ENCODE measurements at regions of chrX and their contacts with region 1.

Region 1: DNA sequence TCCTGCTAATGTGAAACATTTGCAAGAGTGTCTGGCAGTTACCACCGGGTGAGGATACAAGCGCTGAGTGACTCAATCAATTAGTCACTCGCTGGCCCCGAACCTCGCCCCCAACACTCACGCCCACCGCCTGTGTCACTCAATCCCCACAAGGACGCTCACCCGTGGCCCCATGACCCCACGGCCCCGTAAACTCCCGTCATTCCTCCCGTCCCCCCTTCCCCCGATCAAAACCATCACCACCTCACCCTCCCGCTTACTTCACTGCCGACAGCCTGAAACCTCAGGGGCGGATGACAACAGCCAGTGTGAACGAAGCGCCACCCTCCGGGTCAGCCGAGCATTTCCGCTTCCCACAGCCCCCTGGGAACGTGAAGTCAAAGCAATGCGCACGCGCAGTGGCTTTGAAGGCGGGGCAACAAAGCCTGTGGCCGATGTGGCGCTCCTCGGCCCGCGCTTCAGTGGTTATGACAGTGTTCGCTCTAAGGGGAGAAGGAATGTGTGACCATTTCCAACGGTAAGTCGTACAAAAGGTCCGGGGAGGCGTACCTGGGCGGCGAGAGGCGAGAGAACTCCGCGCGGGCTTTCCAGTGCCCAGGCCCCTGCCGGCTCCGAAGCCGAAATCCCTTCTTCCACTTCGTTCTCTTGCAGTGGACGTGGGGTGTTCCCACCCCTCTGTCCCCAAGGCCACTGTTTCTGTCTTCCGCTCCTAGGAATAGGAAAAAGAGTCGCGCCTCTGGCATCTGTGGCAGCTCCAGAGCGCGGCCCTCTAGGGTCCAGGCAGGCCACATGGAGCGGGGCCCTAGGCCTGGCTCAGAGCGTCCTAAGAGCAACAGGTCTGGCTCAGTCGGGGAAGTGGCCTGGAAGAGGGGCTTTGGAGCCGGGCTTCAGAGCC is at the start of gene ZNF674:
- DNase-seq: peak; percentile 87 to 97 (median 93)
- ATAC-seq: peak; percentile 91
- H3K4me3 ChIP-seq: peak within 1 kb of the TSS; percentile 93
- H3K4me3 Mint-ChIP-seq: peak within 1 kb of the TSS; percentile 93
- H3K27ac ChIP-seq: peak within 1 kb of the TSS; percentile 89 to 91
- H3K27ac Mint-ChIP-seq: peak within 1 kb of the TSS; percentile 97
- H3K4me1 ChIP-seq: peaks cover 22% of the 10 kb centered on the region
- H3K4me1 Mint-ChIP-seq: peaks cover 29% of the 10 kb centered on the region
- H3K27me3 ChIP-seq: no peaks in the 10 kb centered on the region
- H3K27me3 Mint-ChIP-seq: no peaks in the 10 kb centered on the region
- CTCF ChIP-seq: no peak
- total RNA-seq, gene ZNF674: 0.50 to 1.1 TPM

Region 2: GRCh38 chrX:45769761-45770582 is 775.4 kb before region 1 on chrX:
- CTCF ChIA-PET with region 1: no interaction called
- POLR2A ChIA-PET with region 1: no interaction called
- intact Hi-C with region 1: loop called in 1 of 2 experiments (anchors 10 kb)
- DNase-seq: peak in 5 of 9 experiments; percentile 3 to 76 (median 24)
- ATAC-seq: peak; percentile 19
- H3K4me3 ChIP-seq: peak overlapping the region; percentile 38 to 57
- H3K4me3 Mint-ChIP-seq: peak overlapping the region; percentile 95
- H3K27ac ChIP-seq: peak overlapping the region; percentile 41 to 81
- H3K27ac Mint-ChIP-seq: peak overlapping the region; percentile 97
- H3K4me1 ChIP-seq: peaks cover 23% of the 10 kb centered on the region
- H3K4me1 Mint-ChIP-seq: peaks cover 64% of the 10 kb centered on the region
- H3K27me3 ChIP-seq: no peaks in the 10 kb centered on the region
- H3K27me3 Mint-ChIP-seq: no peaks in the 10 kb centered on the region
- CTCF ChIP-seq: no peak

Region 3: DNA sequence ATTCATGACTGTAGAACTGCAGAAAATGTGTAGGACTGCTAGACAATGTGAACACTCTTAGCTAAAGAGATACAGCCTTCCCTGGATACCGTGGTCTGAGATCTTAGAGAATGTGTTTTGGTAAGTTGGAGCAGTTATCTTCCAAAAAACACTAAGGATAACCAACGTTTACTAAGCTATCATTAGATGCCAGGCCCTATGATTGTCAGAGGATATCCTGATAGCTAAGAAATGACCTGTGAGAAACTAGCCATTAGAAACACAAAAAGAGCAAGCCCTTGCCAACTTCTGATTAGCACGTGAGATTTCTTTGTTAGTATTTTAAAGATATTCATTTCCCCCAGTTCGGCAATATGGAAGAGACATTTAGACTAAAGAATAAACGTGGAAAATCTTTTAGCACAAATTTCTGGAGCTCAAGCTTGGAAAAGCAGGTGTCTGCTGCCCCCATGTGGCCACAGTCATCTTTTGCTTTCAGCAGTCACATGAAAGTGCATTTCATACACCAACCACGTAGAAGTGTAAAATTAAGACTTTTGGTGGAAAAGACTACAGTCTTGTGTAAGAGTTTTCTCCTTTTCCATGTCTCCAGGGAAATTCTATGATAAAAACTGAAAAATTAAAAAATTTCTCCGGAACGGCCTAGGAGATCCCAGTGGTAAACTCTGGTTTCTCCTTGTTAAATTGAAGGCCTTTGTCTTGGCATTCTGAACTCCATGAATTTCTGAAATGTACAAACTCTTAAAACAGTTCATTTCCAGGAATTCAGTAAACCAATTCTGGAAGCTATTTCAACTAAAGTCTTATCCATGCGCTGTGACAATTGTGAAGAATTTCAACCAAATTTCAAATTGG is 136.6 kb before region 1 on chrX:
- CTCF ChIA-PET with region 1: no interaction called
- POLR2A ChIA-PET with region 1: no interaction called
- intact Hi-C with region 1: loop called in 1 of 2 experiments (anchors 1 kb)
- DNase-seq: peak; percentile 28 to 70 (median 64)
- ATAC-seq: no peak
- H3K4me3 ChIP-seq: no peak overlapping the region
- H3K4me3 Mint-ChIP-seq: no peak overlapping the region
- H3K27ac ChIP-seq: no peak overlapping the region
- H3K27ac Mint-ChIP-seq: no peak overlapping the region
- H3K4me1 ChIP-seq: no peaks in the 10 kb centered on the region
- H3K4me1 Mint-ChIP-seq: no peaks in the 10 kb centered on the region
- H3K27me3 ChIP-seq: no peaks in the 10 kb centered on the region
- H3K27me3 Mint-ChIP-seq: no peaks in the 10 kb centered on the region
- CTCF ChIP-seq: peak; percentile 60

Region 4: GRCh38 chrX:46446727-46447378 is 98.5 kb before region 1 on chrX:
- CTCF ChIA-PET with region 1: no interaction called
- POLR2A ChIA-PET with region 1: no interaction called
- intact Hi-C with region 1: loop called (anchors 1 kb)
- DNase-seq: peak; percentile 67 to 93 (median 84)
- ATAC-seq: peak; percentile 91
- H3K4me3 ChIP-seq: peak overlapping the region; percentile 83 to 85
- H3K4me3 Mint-ChIP-seq: peak overlapping the region; percentile 84
- H3K27ac ChIP-seq: peak overlapping the region; percentile 82 to 90
- H3K27ac Mint-ChIP-seq: peak overlapping the region; percentile 94
- H3K4me1 ChIP-seq: peaks cover 16% of the 10 kb centered on the region
- H3K4me1 Mint-ChIP-seq: peaks cover 26% of the 10 kb centered on the region
- H3K27me3 ChIP-seq: no peaks in the 10 kb centered on the region
- H3K27me3 Mint-ChIP-seq: no peaks in the 10 kb centered on the region
- CTCF ChIP-seq: no peak

Region 5: GRCh38 chrX:46488712-46489111 is 56.6 kb before region 1 on chrX:
- CTCF ChIA-PET with region 1: no interaction called
- POLR2A ChIA-PET with region 1: no interaction called
- intact Hi-C with region 1: no loop called
- DNase-seq: no peak
- ATAC-seq: no peak
- H3K4me3 ChIP-seq: no peak overlapping the region
- H3K4me3 Mint-ChIP-seq: no peak overlapping the region
- H3K27ac ChIP-seq: no peak overlapping the region
- H3K27ac Mint-ChIP-seq: peak overlapping the region; percentile 52
- H3K4me1 ChIP-seq: no peaks in the 10 kb centered on the region
- H3K4me1 Mint-ChIP-seq: peaks cover 9% of the 10 kb centered on the region
- H3K27me3 ChIP-seq: no peaks in the 10 kb centered on the region
- H3K27me3 Mint-ChIP-seq: no peaks in the 10 kb centered on the region
- CTCF ChIP-seq: no peak

Region 6: GRCh38 chrX:46573331-46573891 is 28.1 kb after region 1 on chrX and contains the start of gene CHST7:
- CTCF ChIA-PET with region 1: no interaction called
- POLR2A ChIA-PET with region 1: no interaction called
- intact Hi-C with region 1: loop called (anchors 1 kb)
- DNase-seq: peak; percentile 15 to 77 (median 54)
- ATAC-seq: peak; percentile 57
- H3K4me3 ChIP-seq: peak within 1 kb of the TSS; percentile 63 to 64
- H3K4me3 Mint-ChIP-seq: peak within 1 kb of the TSS; percentile 79
- H3K27ac ChIP-seq: peak within 1 kb of the TSS; percentile 45 to 77
- H3K27ac Mint-ChIP-seq: peak within 1 kb of the TSS; percentile 87
- H3K4me1 ChIP-seq: peaks cover 27% of the 10 kb centered on the region
- H3K4me1 Mint-ChIP-seq: peaks cover 34% of the 10 kb centered on the region
- H3K27me3 ChIP-seq: no peaks in the 10 kb centered on the region
- H3K27me3 Mint-ChIP-seq: peaks cover 3% of the 10 kb centered on the region
- CTCF ChIP-seq: no peak
- total RNA-seq, gene CHST7: 9.4 to 9.7 TPM

Region 7: GRCh38 chrX:46642145-46642544 is 96.8 kb after region 1 on chrX:
- CTCF ChIA-PET with region 1: no interaction called
- POLR2A ChIA-PET with region 1: no interaction called
- intact Hi-C with region 1: loop called in 1 of 2 experiments (anchors 5 kb)
- DNase-seq: peak in 3 of 9 experiments; percentile 0 to 49 (median 36)
- ATAC-seq: peak; percentile 54
- H3K4me3 ChIP-seq: no peak overlapping the region
- H3K4me3 Mint-ChIP-seq: no peak overlapping the region
- H3K27ac ChIP-seq: no peak overlapping the region
- H3K27ac Mint-ChIP-seq: no peak overlapping the region
- H3K4me1 ChIP-seq: no peaks in the 10 kb centered on the region
- H3K4me1 Mint-ChIP-seq: peaks cover 4% of the 10 kb centered on the region
- H3K27me3 ChIP-seq: no peaks in the 10 kb centered on the region
- H3K27me3 Mint-ChIP-seq: no peaks in the 10 kb centered on the region
- CTCF ChIP-seq: no peak

Region 8: DNA sequence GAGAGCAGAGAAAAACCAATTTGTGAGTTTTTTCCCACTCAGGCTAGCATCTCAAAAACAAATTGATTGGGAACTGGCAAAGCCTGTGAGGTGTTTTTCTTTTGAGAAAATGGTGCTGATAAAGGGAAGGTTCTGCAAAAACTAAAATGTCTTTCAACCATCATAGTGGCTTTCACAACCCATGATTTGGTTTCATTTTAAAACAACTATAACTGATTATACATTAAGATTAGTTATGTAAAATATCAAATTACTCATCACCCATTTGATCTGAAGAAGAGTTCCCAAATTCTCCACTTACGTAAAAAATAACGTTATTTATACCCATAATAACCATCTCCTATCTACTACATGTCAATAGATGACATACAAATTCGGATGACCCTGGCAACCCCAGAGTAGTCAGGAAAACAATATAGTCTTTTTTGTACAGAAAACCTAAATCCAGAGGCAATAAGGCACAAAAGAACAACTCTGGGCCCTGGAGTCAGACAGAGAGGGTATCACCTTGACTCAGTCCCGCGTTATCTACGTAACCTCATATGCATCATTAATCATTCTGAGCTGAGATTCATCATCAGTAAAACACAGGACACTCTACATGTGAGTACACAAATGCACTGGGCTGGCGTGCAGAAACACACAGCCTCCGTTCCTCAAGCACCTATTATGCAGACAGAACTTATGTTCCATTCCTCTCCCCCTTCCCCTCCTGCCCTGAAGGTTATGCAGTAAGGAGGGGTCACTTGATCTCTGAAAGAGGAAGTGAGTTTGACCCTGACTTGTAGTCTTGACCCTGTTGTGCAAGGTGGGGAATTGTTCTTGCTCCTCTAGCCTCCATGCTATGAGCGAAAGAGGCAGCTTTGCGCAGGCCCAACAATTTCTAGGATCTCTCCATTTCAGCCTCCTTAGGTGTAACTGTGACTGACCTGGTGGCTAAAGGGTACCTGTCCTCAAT is 131.3 kb after region 1 on chrX:
- CTCF ChIA-PET with region 1: no interaction called
- POLR2A ChIA-PET with region 1: no interaction called
- intact Hi-C with region 1: no loop called
- DNase-seq: no peak
- ATAC-seq: no peak
- H3K4me3 ChIP-seq: no peak overlapping the region
- H3K4me3 Mint-ChIP-seq: no peak overlapping the region
- H3K27ac ChIP-seq: no peak overlapping the region
- H3K27ac Mint-ChIP-seq: no peak overlapping the region
- H3K4me1 ChIP-seq: no peaks in the 10 kb centered on the region
- H3K4me1 Mint-ChIP-seq: no peaks in the 10 kb centered on the region
- H3K27me3 ChIP-seq: no peaks in the 10 kb centered on the region
- H3K27me3 Mint-ChIP-seq: no peaks in the 10 kb centered on the region
- CTCF ChIP-seq: no peak

Region 9: DNA sequence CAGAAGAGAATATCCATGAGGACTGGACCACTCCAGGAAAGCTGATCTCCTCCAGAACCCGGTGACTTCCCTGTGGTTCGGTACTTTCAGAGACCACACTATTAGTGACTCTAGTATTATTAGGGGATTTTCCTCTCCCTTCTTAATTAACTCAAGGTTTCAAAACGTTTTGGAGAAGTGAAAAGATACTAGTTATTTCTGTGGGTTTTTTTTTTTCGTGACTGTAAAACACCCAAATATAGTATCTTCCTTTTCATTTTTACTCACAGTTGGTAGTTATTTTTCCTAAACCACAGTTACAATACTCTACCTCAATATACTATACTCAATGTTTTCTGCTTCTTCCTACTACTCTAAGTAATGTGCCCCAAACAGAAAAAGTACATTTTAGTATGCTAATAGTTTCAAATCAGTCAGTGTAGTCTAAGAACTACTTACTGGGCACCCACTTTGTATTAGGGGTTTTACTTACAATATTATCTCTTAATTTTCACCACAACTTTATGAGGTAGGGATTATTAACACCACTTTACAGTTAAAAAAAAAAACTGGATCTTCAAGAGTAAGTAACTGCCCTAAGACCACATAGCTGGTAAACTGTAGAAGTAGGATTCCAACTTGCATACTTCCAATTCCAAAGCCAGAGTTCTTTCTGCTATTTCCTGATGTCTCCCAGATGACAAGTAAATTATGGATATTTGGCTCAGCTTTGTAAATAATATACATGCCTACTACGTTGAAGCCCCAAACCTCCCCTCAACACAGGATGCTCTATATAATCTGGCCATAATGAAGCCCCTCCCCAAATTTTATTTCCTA is 168.5 kb after region 1 on chrX:
- CTCF ChIA-PET with region 1: no interaction called
- POLR2A ChIA-PET with region 1: no interaction called
- intact Hi-C with region 1: no loop called
- DNase-seq: no peak
- ATAC-seq: no peak
- H3K4me3 ChIP-seq: no peak overlapping the region
- H3K4me3 Mint-ChIP-seq: no peak overlapping the region
- H3K27ac ChIP-seq: no peak overlapping the region
- H3K27ac Mint-ChIP-seq: no peak overlapping the region
- H3K4me1 ChIP-seq: no peaks in the 10 kb centered on the region
- H3K4me1 Mint-ChIP-seq: no peaks in the 10 kb centered on the region
- H3K27me3 ChIP-seq: no peaks in the 10 kb centered on the region
- H3K27me3 Mint-ChIP-seq: no peaks in the 10 kb centered on the region
- CTCF ChIP-seq: no peak

Region 10: GRCh38 chrX:46836701-46837557 is 291.6 kb after region 1 on chrX and contains the start of gene RP2:
- CTCF ChIA-PET with region 1: no interaction called
- POLR2A ChIA-PET with region 1: no interaction called
- intact Hi-C with region 1: loop called in 1 of 2 experiments (anchors 1 kb)
- DNase-seq: peak; percentile 61 to 92 (median 86)
- ATAC-seq: peak; percentile 95
- H3K4me3 ChIP-seq: peak within 1 kb of the TSS; percentile 95 to 96
- H3K4me3 Mint-ChIP-seq: peak within 1 kb of the TSS; percentile 97
- H3K27ac ChIP-seq: peak within 1 kb of the TSS; percentile 82 to 91
- H3K27ac Mint-ChIP-seq: peak within 1 kb of the TSS; percentile 95
- H3K4me1 ChIP-seq: peaks cover 15% of the 10 kb centered on the region
- H3K4me1 Mint-ChIP-seq: peaks cover 24% of the 10 kb centered on the region
- H3K27me3 ChIP-seq: no peaks in the 10 kb centered on the region
- H3K27me3 Mint-ChIP-seq: no peaks in the 10 kb centered on the region
- CTCF ChIP-seq: no peak
- total RNA-seq, gene RP2: 4.4 to 4.9 TPM

Measured in CD8-positive, alpha-beta T cell (primary cell).